ENCODE measurements at regions of chr7 and their contacts with region 1.

Region 1: GRCh38 chr7:73822319-73823076 is 8.3 kb upstream of the CLDN4 start:
- DNase-seq: peak; percentile 91 to 98
- ATAC-seq: peak; percentile 96 to 97
- H3K4me3 ChIP-seq: 0 out of 3 replicates have a peak overlapping the region, but pooled peaks have one; percentile 3
- H3K27ac ChIP-seq: peak overlapping the region; percentile 82 to 88
- H3K4me1 ChIP-seq: peaks cover 32% of the 10 kb centered on the region
- CTCF ChIP-seq: no peak
- EP300 ChIP-seq: no peak
- POLR2A ChIP-seq: no peak
- RAD21 ChIP-seq: no peak; a peak in 1 of 5 replicates

Region 2: GRCh38 chr7:73811760-73812168 is 10.7 kb before region 1 on chr7:
- CTCF ChIA-PET with region 1: interaction called, 28 read pairs
- POLR2A ChIA-PET with region 1: no interaction called
- DNase-seq: peak; percentile 67 to 72
- ATAC-seq: peak; percentile 93 to 97
- H3K4me3 ChIP-seq: no peak overlapping the region
- H3K27ac ChIP-seq: no peak overlapping the region
- H3K4me1 ChIP-seq: peaks cover 7% of the 10 kb centered on the region; the same call in 2 of the 3 replicates
- CTCF ChIP-seq: peak; percentile 59
- EP300 ChIP-seq: no peak
- POLR2A ChIP-seq: no peak
- RAD21 ChIP-seq: peak; percentile 63 to 72

Region 3: DNA sequence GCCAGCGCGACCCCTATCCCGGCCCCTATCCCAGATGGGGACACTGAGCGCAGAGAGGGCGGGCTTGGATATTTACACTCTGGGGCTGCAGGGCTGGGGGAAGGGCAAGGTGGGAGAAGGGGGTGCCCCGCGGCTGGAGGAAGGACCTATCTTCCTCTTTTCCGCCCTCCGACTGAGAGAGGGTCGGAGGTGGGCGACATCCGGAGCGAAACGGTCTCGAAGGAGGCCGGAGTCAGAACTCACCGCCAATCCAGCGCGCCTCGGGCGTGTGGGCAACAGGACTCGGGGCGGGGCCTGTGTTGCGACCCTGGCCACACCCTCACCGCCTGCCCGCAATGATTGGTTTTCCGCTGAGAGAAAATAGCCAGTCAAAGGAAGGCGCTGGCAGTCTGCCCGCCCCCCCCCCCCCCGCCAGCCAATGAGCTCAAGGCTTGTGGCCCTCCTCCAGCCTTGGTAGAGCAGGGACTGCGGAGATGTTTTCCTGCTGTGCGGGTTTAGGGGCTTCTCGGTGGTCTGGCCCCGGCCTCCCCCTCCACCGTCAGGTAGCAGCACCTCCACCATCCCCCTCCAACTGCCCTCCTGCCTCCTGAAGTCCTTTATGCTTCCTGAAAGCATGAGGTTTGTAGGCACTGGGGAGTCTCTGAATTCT is 19.9 kb after region 1 on chr7 and contains the start of gene METTL27:
- CTCF ChIA-PET with region 1: interaction called, 9 read pairs
- POLR2A ChIA-PET with region 1: interaction called, 17 read pairs
- DNase-seq: peak; percentile 92 to 98
- ATAC-seq: peak; percentile 93 to 96
- H3K4me3 ChIP-seq: peak within 1 kb of the TSS; percentile 76
- H3K27ac ChIP-seq: peak within 1 kb of the TSS; percentile 87 to 92
- H3K4me1 ChIP-seq: peaks cover 8% of the 10 kb centered on the region; the same call in 1 of the 3 replicates
- CTCF ChIP-seq: no peak
- EP300 ChIP-seq: no peak
- POLR2A ChIP-seq: peak; percentile 67
- RAD21 ChIP-seq: no peak
- polyA plus RNA-seq, gene METTL27: 4.1 and 5.5 TPM in 2 replicates

Region 4: DNA sequence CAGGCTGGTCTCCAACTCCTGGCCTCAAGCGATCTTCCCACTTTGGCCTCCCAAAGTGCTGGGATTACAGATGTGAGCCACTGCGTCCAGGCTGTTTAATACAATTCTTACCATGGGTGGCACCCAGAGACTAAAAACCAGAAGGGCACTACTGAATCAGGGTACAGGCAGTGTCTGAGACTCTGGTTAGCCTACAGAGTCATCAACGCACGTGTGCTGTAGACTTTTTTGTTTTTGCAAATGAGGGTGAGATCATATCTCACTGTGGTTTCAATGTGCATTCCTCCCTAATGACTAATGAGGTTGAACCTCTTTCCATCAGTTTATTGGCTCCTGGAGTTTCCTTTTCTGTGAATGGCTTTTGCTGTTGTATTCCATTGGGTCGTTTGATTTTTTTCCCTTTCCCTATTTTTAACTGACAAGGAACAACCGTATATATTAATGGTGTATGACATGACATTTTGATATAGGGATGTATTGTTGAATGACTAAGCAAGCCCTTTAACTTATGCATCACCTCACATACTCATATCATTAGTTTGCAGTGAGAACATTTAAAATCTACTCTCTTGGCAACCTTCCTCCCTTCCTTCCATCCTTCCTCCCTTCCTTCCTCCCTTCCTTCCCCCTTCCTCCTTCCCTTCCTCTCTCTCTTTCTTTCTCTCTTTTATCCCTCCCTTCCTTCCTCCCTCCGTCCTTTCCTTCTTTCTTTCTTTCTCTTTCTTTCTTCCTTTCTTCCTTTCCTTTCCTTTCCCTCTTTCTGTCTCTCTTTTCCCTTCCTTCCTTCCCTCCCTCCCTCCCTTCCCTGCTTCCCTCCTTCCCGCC is 29.1 kb after region 1 on chr7:
- CTCF ChIA-PET with region 1: interaction called, 30 read pairs
- POLR2A ChIA-PET with region 1: interaction called, 8 read pairs
- DNase-seq: peak; percentile 62 to 79
- ATAC-seq: peak; percentile 65 to 74
- H3K4me3 ChIP-seq: no peak overlapping the region
- H3K27ac ChIP-seq: peak overlapping the region; percentile 73 to 83
- H3K4me1 ChIP-seq: peaks cover 36% of the 10 kb centered on the region
- CTCF ChIP-seq: no peak
- EP300 ChIP-seq: no peak
- POLR2A ChIP-seq: no peak
- RAD21 ChIP-seq: no peak

Region 5: DNA sequence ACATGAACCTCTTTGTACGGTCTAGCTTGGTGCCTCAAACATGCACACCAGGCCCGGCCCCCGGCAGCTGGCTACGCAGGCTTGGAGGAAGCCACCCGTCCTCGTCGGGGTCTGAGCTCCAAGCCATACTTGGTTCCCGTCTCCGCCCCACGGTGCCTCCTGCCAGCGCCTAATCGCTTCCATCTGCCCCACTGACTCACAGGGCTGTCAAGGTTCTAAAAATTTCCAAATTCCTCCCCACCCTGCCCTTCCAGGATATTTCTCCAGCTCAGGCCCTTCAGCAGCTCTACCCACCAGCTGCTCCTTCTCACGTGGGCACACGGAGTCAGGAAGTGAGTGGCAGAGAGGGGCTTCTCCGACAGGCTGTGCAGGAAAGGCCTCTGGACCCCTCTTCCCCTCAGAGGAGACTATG is 77.2 kb after region 1 on chr7:
- CTCF ChIA-PET with region 1: no interaction called
- POLR2A ChIA-PET with region 1: no interaction called
- DNase-seq: no peak
- ATAC-seq: no peak
- H3K4me3 ChIP-seq: no peak overlapping the region
- H3K27ac ChIP-seq: peak overlapping the region in 1 of 2 experiments; percentile 31; a peak in 1 of 6 replicates
- H3K4me1 ChIP-seq: peaks cover 7% of the 10 kb centered on the region; the same call in 2 of the 3 replicates
- CTCF ChIP-seq: no peak
- EP300 ChIP-seq: no peak
- POLR2A ChIP-seq: no peak
- RAD21 ChIP-seq: no peak

Region 6: DNA sequence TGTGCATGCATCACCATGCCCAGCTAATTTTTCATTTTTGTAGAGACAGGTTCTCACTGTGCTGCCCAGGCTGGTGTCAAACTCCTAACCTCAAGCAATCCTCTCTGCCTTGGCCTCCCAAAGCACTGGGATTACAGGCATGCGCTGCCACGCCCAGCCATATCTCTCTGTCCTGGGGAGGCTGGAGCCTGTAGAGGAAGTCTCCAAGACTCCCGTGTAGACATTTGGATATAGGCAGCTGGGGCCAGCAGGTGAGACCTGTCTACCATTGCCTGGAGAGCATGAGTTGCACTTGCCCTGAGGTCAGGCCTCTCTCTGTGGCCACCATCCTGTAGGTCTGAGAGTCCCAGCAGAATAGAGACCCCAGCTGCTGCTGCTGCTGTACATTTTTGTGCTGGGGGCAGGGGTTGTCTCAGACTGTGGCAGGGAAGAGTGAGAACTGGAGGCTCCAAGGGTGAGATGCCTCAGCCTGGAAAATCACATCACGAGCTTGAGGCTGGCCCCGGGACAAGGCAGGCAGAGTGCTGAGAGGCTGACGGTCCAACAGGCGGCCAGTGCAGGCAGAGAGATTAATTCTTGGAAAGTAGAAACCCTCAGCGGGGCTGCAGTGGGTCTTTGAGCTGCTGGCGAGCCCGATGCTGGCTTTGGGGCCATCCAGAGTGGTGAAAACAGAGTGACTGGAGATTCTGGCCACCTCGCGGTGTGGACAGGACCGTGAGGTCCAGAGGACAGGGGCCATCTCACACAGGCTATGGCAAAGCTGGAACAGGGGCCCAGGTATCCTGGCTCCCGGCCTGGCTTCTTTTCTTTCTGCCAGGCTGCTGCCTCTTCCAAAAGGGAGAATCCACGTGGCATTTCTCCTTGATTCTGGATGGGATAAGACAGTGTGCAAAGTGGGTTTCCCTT is 99.4 kb after region 1 on chr7:
- CTCF ChIA-PET with region 1: no interaction called
- POLR2A ChIA-PET with region 1: no interaction called
- DNase-seq: no peak
- ATAC-seq: peak; percentile 28 to 64; a peak in 5 of 6 replicates
- H3K4me3 ChIP-seq: no peak overlapping the region
- H3K27ac ChIP-seq: no peak overlapping the region
- H3K4me1 ChIP-seq: no peaks in the 10 kb centered on the region
- CTCF ChIP-seq: no peak
- EP300 ChIP-seq: no peak
- POLR2A ChIP-seq: no peak
- RAD21 ChIP-seq: no peak

Measured in A549 (cell line).